ENCODE measurements at regions of chr15 and their contacts with region 1.

Region 1: GRCh38 chr15:82999905-83000671 is 11.4 kb downstream of the C15orf40 start:
- H3K4me3 ChIP-seq: no peak overlapping the region
- H3K27ac ChIP-seq: no peak overlapping the region
- H3K4me1 ChIP-seq: no peaks in the 10 kb centered on the region
- CTCF ChIP-seq: peak; percentile 68; the same call in 1 of the 2 replicates

Region 2: DNA sequence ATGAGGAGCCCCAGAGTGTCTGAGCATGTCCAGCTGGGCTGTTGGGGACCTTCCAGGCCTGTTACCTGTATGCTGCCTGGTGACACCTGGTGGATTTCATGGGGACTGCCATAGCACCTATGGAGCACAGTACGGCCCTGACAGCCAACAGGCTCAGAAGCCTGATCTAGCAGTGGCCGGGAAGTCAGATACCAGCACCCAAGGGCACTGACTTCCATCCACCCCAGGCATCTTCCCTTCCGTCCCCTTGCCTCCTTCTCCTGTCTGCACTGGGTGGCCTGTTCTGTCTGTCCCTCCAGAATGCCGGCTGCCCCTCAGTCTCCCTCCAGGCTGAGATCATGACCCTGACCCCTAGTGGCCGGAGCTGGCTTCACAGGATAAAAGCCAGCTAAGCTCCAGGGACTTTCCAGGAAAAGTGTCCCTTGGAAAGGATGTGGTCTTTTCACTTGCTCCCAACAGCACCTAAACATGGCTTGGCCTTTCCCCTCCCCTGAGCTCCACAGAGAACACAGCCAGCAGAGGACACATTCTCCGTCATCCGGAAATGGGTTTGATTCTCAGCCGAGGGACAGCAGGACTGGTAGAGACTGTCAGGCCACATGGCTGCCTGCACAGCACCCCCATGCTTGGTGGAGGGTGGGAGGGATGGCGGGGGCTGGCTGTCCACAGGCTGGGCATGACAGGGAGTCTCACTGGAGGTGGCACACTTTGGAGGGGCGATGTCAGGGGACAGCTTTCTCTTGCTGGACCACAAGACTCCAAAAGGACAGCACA is 469.3 kb before region 1 on chr15:
- CTCF ChIA-PET with region 1: interaction called, 13 read pairs
- POLR2A ChIA-PET with region 1: interaction called, 3 read pairs
- H3K4me3 ChIP-seq: peak overlapping the region; percentile 41
- H3K27ac ChIP-seq: no peak overlapping the region
- H3K4me1 ChIP-seq: no peaks in the 10 kb centered on the region
- CTCF ChIP-seq: peak; percentile 98

Region 3: GRCh38 chr15:82985688-82986441 is 14.2 kb before region 1 on chr15 and contains the start of gene RAMAC:
- CTCF ChIA-PET with region 1: interaction called, 17 read pairs
- POLR2A ChIA-PET with region 1: interaction called, 4 read pairs
- H3K4me3 ChIP-seq: peak within 1 kb of the TSS; percentile 63
- H3K27ac ChIP-seq: peak within 1 kb of the TSS; percentile 79
- H3K4me1 ChIP-seq: peaks cover 8% of the 10 kb centered on the region
- CTCF ChIP-seq: no peak

Region 4: DNA sequence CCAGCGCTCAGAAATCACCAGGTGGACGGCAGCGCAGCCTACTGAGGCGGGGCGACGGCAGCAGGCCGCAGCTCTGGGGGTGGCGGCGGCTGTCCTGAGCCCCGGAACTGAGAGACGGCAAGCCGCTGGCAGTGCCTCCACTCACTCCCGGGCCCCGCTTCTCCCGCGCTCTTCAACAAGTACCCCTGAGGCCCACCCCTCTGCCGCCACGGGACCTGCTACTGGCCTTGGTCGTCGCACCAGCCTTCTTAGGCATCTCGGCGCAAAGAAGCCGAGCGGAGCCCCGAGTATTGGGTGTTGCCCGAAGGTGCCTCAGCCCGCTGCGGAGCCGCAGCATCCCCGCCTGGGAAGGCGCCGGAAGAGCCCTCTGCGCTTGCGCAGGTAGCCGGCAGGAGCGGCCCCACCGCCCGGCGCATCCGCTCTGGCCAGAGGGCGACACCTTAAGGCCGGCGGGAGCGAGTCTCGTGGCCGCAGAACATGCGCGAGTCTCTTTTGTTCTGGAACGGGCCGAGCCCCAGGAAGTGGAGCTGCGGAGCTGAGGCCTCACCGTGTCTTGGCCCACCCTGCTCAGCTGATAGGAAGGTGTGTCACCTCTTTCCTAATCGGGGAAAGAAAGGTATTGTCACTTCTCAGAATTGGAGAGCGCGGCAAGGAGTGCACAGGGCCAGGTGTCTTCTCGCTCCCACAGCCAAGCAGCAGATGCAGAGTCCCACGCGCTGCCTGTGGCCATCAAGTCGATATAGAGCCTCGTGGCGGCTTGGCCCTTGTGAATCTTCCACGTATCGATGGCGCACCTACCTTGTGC is 11.4 kb after region 1 on chr15 and contains the start of gene C15orf40:
- CTCF ChIA-PET with region 1: interaction called, 44 read pairs
- POLR2A ChIA-PET with region 1: interaction called, 4 read pairs
- H3K4me3 ChIP-seq: peak within 1 kb of the TSS; percentile 97
- H3K27ac ChIP-seq: peak within 1 kb of the TSS; percentile 68
- H3K4me1 ChIP-seq: peaks cover 6% of the 10 kb centered on the region
- CTCF ChIP-seq: peak; percentile 97

Region 5: GRCh38 chr15:83077491-83078230 is 77.6 kb after region 1 on chr15:
- CTCF ChIA-PET with region 1: no interaction called
- POLR2A ChIA-PET with region 1: no interaction called
- H3K4me3 ChIP-seq: no peak overlapping the region
- H3K27ac ChIP-seq: no peak overlapping the region
- H3K4me1 ChIP-seq: no peaks in the 10 kb centered on the region
- CTCF ChIP-seq: no peak

Region 6: GRCh38 chr15:83100097-83100646 is 100.1 kb after region 1 on chr15:
- CTCF ChIA-PET with region 1: no interaction called
- POLR2A ChIA-PET with region 1: no interaction called
- H3K4me3 ChIP-seq: no peak overlapping the region
- H3K27ac ChIP-seq: no peak overlapping the region
- H3K4me1 ChIP-seq: no peaks in the 10 kb centered on the region
- CTCF ChIP-seq: no peak

Measured in HEK293 (cell line).